Mammary epithelial cell (primary cell): ENCODE measurements at regions of chr14 and their contacts with region 1.

Region 1: DNA sequence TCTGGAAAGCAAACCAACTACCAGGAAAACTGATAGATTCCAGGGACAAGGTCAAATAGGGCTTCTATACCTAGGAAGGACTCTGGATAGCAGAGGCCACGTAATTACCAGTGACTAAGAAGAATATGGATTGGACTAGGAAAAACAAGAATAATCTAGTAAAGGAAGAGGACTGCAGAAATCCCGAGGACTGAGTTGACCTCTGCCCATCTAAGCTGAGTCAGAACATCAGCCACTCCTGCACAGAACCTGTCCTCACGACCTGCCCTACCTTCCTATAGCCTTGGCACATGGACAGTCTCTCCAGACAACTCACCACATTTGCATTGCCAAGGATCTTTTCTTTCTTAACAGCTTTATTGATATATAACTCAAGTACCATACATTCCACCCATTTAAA is 2.3 kb downstream of the OR6J1 start:
- DNase-seq: peak; percentile 32
- H3K4me3 ChIP-seq: no peak overlapping the region
- H3K27ac ChIP-seq: no peak overlapping the region
- H3K4me1 ChIP-seq: peaks cover 10% of the 10 kb centered on the region
- H3K27me3 ChIP-seq: no peaks in the 10 kb centered on the region
- CTCF ChIP-seq: no peak

Region 2: DNA sequence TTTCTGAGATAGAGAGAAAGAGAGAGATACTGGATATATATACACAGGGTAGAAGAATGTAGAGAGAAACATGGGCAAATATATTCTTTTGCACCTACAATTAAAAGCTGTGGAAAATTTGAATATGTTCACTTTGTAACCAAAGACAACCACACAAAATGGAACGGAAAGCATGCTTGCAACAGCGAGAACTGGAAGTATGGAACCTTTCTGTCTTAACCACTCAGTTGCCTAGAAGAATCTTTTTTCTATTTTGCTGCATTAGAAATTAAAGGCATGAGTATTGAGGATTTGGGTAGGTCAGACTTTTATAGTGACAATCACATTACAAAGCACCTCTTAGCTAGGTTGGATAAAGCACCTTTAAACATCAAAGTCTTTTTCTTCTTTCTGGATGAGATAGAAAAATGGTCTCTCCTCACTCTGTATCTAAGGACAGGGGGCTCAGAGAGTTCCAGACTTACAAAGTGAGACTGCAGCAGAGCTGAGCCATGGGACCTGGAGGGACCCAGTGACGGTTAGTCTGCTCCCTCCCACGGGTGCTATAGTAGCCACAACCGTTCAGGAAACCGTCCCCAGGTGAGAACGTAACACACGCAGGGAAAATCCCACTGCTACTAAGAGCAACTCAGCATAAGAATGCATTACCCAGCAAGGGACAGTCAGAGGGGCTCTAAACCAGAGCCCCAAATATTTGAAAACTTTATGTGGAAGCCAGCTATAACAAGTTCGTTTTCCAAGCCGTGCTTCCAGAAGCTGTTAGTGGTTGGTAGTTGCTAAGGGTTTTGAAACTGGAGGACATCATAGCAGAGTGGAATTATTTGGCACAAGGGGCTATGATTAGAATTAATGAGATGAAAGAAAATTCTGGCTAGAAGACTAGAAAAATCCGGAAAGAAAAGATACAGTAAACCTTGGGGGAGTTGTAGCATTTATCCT is 149.9 kb before region 1 on chr14:
- CTCF ChIA-PET with region 1: no interaction called
- dilution Hi-C with region 1: no loop called
- in situ Hi-C with region 1: no loop called
- intact Hi-C with region 1: no loop called
- DNase-seq: no peak
- H3K4me3 ChIP-seq: no peak overlapping the region
- H3K27ac ChIP-seq: no peak overlapping the region
- H3K4me1 ChIP-seq: no peaks in the 10 kb centered on the region
- H3K27me3 ChIP-seq: peaks cover 6% of the 10 kb centered on the region
- CTCF ChIP-seq: no peak

Region 3: GRCh38 chr14:22505697-22506377 is 136.0 kb before region 1 on chr14:
- CTCF ChIA-PET with region 1: no interaction called
- dilution Hi-C with region 1: no loop called
- in situ Hi-C with region 1: no loop called
- intact Hi-C with region 1: no loop called
- DNase-seq: no peak
- H3K4me3 ChIP-seq: no peak overlapping the region
- H3K27ac ChIP-seq: no peak overlapping the region
- H3K4me1 ChIP-seq: no peaks in the 10 kb centered on the region
- H3K27me3 ChIP-seq: no peaks in the 10 kb centered on the region
- CTCF ChIP-seq: no peak

Region 4: DNA sequence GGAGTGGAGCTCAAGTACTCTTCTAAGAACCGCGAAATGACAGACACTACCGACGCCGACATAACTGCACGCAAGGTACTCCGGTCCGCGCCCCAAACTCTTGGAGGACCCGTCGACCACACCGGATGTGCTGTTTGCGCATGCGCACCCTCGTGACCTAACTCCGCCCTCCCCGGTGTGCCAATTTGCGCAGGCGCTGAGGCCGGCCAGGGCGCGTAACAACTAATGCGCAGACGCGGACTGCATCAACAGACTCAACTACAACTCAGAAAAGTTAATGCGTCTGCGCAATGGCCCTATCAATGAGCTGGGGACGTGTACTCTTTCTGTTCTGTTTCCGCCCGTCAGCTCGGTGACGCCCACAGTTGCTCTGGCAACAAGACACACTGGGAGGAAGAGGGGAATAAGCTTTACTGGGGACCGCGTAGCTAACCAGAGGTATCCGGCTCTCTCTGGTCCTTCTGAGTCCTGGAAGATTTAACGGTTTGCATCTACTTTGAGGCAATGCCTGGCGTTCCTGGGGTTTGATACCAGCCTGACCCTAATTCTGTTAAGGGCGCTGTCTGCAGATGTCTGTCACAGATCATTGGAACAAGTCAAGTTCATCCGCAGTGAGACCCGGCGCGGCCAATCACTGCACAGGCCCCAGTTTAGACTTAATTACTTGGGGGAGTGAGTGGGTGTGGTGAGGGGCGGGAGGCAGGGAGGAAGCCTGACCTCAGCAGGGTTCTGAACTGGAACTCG is 52.6 kb before region 1 on chr14 and contains the start of gene DAD1:
- CTCF ChIA-PET with region 1: interaction called, 4 read pairs
- dilution Hi-C with region 1: no loop called
- in situ Hi-C with region 1: loop called in 1 of 2 experiments (anchors 5 kb)
- intact Hi-C with region 1: loop called (anchors 1 kb)
- DNase-seq: peak; percentile 99
- H3K4me3 ChIP-seq: peak within 1 kb of the TSS; percentile 67 to 98 (median 81)
- H3K27ac ChIP-seq: peak within 1 kb of the TSS; percentile 98
- H3K4me1 ChIP-seq: peaks cover 13% of the 10 kb centered on the region
- H3K27me3 ChIP-seq: no peaks in the 10 kb centered on the region
- CTCF ChIP-seq: no peak
- total RNA-seq, gene DAD1: 154 to 169 TPM

Region 5: DNA sequence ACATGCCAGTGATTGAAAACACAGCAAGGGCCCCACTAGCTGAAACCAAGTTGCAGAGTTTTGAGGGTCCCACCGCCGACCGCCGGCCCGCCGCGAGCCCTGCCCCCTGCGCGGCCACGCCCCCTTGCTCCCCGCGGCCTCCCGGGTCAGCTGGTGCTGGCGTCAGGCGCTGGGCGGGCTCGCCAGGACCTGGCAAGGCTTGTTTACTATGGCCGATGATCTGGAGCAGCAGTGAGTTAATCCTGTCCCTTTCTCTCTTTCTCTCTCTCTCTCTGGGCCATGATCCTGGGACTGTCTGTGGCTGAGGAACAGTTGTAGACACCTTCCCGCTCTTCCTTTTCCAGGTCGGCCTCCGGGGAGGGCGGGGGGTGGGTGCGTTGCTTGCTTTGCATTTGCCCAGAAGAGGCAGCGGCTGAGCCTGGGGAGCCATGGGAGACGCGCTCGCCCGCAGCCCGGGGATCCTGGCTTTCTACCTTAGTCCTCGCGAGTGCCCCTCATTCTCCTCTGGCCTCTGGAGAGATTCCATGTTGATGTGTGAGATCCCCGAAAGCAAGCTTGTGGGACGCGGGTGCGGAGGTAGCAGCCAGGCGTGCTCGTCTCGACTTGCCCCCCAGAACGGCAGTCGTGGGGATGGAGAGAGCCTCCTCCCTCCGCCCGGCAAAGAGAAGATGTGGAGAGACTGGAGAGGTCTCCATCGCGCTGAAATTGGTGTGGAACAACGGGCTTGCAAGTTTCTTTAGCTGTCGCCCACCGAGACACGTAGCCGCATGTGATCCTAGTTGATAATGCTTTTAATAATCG is 43.5 kb before region 1 on chr14 and contains the start of gene ABHD4:
- CTCF ChIA-PET with region 1: interaction called, 4 read pairs
- dilution Hi-C with region 1: no loop called
- in situ Hi-C with region 1: no loop called
- intact Hi-C with region 1: loop called (anchors 1 kb)
- DNase-seq: peak; percentile 65
- H3K4me3 ChIP-seq: peak within 1 kb of the TSS; percentile 77 to 91 (median 90)
- H3K27ac ChIP-seq: peak within 1 kb of the TSS; percentile 85
- H3K4me1 ChIP-seq: peaks cover 28% of the 10 kb centered on the region
- H3K27me3 ChIP-seq: no peaks in the 10 kb centered on the region
- CTCF ChIP-seq: no peak
- total RNA-seq, gene ABHD4: 16.7 to 20.5 TPM

Region 6: GRCh38 chr14:22614224-22614799 is 27.5 kb before region 1 on chr14:
- CTCF ChIA-PET with region 1: no interaction called
- dilution Hi-C with region 1: no loop called
- in situ Hi-C with region 1: no loop called
- intact Hi-C with region 1: loop called (anchors 1 kb)
- DNase-seq: peak; percentile 91
- H3K4me3 ChIP-seq: no peak overlapping the region
- H3K27ac ChIP-seq: peak overlapping the region; percentile 71
- H3K4me1 ChIP-seq: peaks cover 18% of the 10 kb centered on the region
- H3K27me3 ChIP-seq: no peaks in the 10 kb centered on the region
- CTCF ChIP-seq: no peak

Region 7: GRCh38 chr14:22996768-22997654 is 355.2 kb after region 1 on chr14:
- CTCF ChIA-PET with region 1: no interaction called
- dilution Hi-C with region 1: no loop called
- in situ Hi-C with region 1: no loop called
- intact Hi-C with region 1: no loop called
- DNase-seq: no peak
- H3K4me3 ChIP-seq: no peak overlapping the region
- H3K27ac ChIP-seq: no peak overlapping the region
- H3K4me1 ChIP-seq: peaks cover 9% of the 10 kb centered on the region
- H3K27me3 ChIP-seq: no peaks in the 10 kb centered on the region
- CTCF ChIP-seq: no peak